HepG2 (cell line): ENCODE measurements at regions of chr9 and their contacts with region 1.

Region 1: DNA sequence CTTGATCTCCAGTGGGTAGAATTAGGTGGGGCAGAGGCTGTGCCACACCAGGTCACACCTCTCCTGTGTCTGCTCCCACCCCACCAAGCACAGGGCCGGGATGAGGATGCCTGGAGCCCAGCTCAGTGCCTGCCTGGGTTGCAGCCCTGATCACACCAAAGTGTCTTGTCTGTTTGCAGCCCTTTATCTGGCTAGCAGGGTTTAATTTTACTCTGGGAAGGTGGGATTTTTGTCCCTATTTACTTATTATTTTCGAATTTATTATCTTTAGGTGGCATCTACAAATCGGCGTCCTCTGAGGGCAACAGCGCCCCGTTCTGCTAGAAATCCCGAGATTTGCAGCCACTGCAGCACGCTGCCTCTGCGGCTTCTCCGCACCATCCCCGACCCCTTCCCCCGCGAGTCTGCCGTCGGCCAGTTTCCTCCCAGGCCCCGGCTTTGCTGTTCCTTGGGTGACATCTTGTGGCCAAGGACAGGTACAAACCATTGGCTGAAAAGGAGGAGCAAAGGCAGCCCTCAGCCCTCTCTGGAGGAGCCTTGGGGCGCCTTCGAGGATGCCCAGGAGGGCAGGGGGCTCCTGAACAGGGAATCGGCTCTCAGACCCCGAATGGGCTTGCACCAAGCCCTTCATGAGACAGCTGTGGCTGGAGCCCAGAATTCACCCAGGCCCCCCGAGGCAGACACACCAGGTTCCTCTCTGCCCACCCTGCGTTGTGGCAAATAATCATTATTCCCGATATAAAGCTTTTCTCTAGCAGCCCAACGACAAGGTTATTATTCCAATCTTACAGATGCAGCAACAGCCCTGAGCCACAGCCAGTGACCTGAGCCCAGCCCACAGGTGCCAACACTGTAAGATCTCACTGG is 113.0 kb downstream of the GAPVD1 start:
- DNase-seq: peak; percentile 65
- ATAC-seq: peak; percentile 77
- H3K4me3 ChIP-seq: peak overlapping the region in 2 of 3 experiments; percentile 3 to 58; a peak in 3 of 6 replicates
- H3K27ac ChIP-seq: no peak overlapping the region
- H3K4me1 ChIP-seq: peaks cover 77% of the 10 kb centered on the region
- H3K27me3 ChIP-seq: peaks cover 2 to 17% of the 10 kb centered on the region in 2 experiments; a peak in 3 of 5 replicates
- CTCF ChIP-seq: peak; percentile 96
- EP300 ChIP-seq: no peak
- POLR2A ChIP-seq: no peak
- RAD21 ChIP-seq: peak; percentile 90

Region 2: GRCh38 chr9:125143375-125144090 is 231.1 kb before region 1 on chr9 and contains the start of gene SCAI:
- CTCF ChIA-PET with region 1: no interaction called
- POLR2A ChIA-PET with region 1: no interaction called
- in situ Hi-C with region 1: no loop called
- intact Hi-C with region 1: no loop called
- DNase-seq: peak; percentile 97
- ATAC-seq: peak; percentile 99
- H3K4me3 ChIP-seq: peak within 1 kb of the TSS; percentile 55 to 82 (median 71)
- H3K27ac ChIP-seq: peak within 1 kb of the TSS; percentile 56
- H3K4me1 ChIP-seq: peaks cover 20% of the 10 kb centered on the region
- H3K27me3 ChIP-seq: no peaks in the 10 kb centered on the region; a peak in 1 of 5 replicates
- CTCF ChIP-seq: peak; percentile 96
- EP300 ChIP-seq: 0 out of 4 replicates have a peak, but pooled peaks of 1 of the 2 experiments have one; percentile 13
- POLR2A ChIP-seq: peak in 1 of 2 experiments; percentile 66; a peak in 1 of 4 replicates
- RAD21 ChIP-seq: peak; percentile 97
- total RNA-seq, gene SCAI: 8.4 and 10.3 TPM in 2 replicates

Region 3: DNA sequence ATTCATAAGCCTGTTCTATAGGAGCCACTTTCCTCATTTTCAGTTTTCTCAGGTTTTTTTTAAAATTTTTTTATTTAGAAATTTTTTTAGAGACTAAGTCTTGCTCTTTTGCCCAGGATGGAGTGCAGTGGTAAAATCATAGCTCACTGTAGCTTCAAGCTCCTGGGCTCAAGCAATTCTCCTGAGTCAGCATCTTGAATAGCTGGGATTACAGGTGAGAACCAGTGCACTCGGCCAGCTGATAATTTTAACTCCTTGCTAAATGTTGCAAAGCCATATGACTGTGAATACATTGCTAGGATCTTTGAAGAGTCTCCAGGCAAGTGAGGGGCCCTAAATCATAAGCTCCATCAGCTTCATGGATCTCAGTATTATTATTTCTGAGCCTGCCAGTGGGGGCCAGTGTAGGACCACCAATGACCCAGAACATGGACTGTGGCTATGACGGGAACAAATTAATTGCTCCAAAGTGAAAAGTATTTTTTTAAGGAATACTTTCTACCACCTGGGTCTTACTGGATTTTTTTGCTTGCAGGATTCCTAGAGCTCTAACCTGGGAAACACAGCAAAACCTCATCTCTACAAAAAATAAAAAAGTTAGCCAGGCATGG is 118.8 kb before region 1 on chr9:
- CTCF ChIA-PET with region 1: interaction called, 9 read pairs
- POLR2A ChIA-PET with region 1: no interaction called
- in situ Hi-C with region 1: loop called (anchors 5 kb)
- intact Hi-C with region 1: loop called (anchors 1 kb)
- DNase-seq: peak; percentile 35
- ATAC-seq: peak; percentile 83
- H3K4me3 ChIP-seq: no peak overlapping the region
- H3K27ac ChIP-seq: no peak overlapping the region
- H3K4me1 ChIP-seq: peaks cover 32% of the 10 kb centered on the region
- H3K27me3 ChIP-seq: no peaks in the 10 kb centered on the region
- CTCF ChIP-seq: peak; percentile 77
- EP300 ChIP-seq: no peak
- POLR2A ChIP-seq: no peak
- RAD21 ChIP-seq: peak; percentile 68